AG04449 (cell line): ENCODE measurements at regions of chr1 and their contacts with region 1.

Region 1: GRCh38 chr1:162886705-162887104 is 25.7 kb upstream of the CCDC190 start:
- DNase-seq: no peak
- H3K4me3 ChIP-seq: no peak overlapping the region
- CTCF ChIP-seq: no peak

Region 2: DNA sequence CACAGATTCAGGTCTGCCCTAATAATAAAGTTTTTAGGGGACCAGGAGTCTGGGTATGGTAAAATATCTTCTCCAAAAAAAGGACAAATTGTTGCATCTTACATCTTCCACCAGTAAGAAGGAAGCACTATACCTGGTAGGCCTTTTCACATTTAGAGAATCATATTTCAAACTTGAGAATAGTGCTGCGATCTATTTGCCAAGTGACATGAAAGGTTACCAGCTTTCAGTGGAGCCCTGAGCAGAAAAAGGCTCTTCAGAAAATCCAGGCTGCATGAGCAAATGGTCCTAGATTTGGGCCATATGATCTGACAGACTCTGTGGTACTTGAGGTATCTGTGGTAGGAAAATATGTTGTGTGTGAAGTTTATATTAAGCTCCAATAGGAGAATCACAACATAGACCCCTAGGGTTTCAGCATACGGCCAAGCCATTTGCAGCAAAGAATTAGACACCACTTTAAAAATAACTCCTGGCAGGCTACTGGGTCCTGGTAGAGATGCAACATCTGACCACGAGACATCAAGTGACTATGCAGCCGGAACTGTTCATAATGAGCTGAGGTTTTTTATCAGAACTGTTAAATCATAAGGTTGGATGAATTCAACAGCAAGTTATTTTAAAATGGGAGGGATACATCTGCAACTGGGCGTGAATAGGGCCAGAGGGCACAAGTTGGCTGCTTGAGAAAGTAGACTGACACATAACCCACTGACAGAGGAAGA is 12.9 kb after region 1 on chr1:
- CTCF ChIA-PET with region 1: interaction called, 11 read pairs
- POLR2A ChIA-PET with region 1: no interaction called
- DNase-seq: peak; percentile 83
- H3K4me3 ChIP-seq: no peak overlapping the region
- CTCF ChIP-seq: no peak